Sigmoid colon (tissue), 7 donors: ENCODE measurements at regions of chr3 and their contacts with region 1.

Region 1: DNA sequence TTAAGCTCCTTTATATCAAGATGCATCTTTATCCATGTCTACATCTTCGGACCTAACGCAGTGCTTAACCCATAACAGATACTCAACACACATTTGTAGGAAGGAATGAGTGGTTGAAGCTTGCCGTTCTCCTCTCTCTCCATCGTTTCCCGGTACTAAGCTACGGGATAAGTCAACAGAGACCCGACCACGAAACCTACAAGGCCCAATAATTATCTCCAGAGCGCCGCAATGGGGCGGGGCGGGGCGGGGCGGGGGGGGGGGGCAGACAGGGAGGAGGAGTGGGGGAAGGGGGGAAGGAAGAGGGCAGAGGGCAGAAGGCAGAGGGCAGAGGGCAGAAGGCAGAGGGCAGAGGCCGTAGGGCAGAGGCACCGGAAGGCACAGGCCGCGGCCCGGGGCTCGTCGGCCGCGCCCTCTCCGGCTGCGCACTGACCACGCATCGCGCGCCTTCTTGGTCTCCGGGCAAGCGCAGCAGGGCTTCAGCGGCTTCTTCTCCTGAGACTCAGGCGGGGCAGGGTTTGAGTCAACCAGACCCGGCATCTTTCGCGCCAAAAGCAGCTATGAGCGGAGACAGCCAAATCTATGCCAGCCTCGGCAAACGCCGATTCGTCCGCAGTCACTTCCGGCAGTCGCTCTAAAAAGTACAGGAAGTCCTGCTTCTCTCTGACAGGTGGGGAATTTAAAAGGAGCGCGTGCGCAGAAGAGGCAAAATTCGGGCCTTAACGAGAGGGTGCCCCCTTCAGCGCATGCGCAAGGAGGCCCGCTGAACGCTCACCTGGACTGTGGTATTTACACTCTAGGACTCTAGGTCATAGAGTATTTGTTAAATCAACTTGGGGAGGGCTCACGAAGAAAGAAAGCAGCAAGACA is at the start of gene COX17:
- DNase-seq: peak; percentile 98
- H3K4me3 ChIP-seq: peak within 1 kb of the TSS; percentile 69 to 81 (median 74)
- H3K27ac ChIP-seq: peak within 1 kb of the TSS; percentile 93 to 96 (median 96)
- H3K4me1 ChIP-seq: peaks cover 0 to 19% (median 15%) of the 10 kb centered on the region in 4 donors
- H3K27me3 ChIP-seq: no peaks in the 10 kb centered on the region
- CTCF ChIP-seq: no peak
- EP300 ChIP-seq: no peak
- POLR2A ChIP-seq: peak; percentile 46 to 53
- total RNA-seq, gene COX17: 19.0 to 61.4 (median 42.4) TPM

Region 2: DNA sequence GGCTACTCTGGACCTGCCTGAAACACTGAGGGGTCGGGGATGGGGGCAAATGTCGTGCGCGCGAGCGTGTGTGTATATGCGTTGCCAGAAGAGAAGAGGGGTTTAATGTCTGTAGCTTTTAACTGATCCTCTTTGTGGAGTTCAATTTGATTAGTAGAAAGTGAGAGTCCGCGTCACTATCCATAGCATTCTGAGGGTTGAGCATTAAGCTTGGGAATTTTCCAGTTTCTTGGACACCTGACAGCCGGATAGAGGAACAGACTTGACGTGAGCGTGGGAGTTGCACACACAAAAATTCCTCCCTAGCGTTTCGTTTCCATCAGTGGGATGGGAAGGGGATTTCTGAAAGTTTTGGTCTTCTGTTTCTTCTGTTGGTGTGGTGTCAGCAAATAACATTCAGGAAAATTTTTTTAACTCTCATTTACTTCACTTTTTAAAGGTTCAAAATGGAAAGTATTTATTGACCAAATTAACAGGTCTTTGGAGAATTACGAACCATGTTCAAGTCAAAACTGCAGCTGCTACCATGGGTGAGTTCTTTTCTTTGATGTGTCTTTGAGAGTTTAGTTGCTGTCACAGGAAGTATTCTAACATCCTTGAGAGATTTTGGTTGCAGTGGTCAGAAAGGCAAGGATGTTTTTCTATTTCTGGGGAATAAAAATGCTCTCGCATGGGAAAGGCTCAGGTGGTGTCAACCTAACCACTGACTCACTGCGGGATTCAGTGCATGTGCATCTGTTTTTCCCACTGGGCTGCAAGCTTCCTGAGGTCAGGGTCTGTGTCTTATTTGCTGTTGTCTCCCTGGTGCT is 207.4 kb before region 1 on chr3:
- intact Hi-C with region 1: loop called (anchors 2 kb)
- DNase-seq: no peak
- H3K4me3 ChIP-seq: peak overlapping the region; percentile 62 to 78 (median 75)
- H3K27ac ChIP-seq: peak overlapping the region; percentile 73 to 79 (median 77)
- H3K4me1 ChIP-seq: peaks cover 0 to 20% (median 14%) of the 10 kb centered on the region in 4 donors
- H3K27me3 ChIP-seq: no peaks in the 10 kb centered on the region
- CTCF ChIP-seq: no peak
- EP300 ChIP-seq: no peak
- POLR2A ChIP-seq: no peak

Region 3: GRCh38 chr3:119498186-119498987 is 178.6 kb before region 1 on chr3 and contains the start of gene TIMMDC1:
- intact Hi-C with region 1: loop called (anchors 1 kb)
- DNase-seq: peak; percentile 98
- H3K4me3 ChIP-seq: peak within 1 kb of the TSS; percentile 70 to 79 (median 72)
- H3K27ac ChIP-seq: peak within 1 kb of the TSS; percentile 90 to 94 (median 92)
- H3K4me1 ChIP-seq: peaks cover 0 to 43% (median 30%) of the 10 kb centered on the region in 4 donors
- H3K27me3 ChIP-seq: no peaks in the 10 kb centered on the region
- CTCF ChIP-seq: no peak
- EP300 ChIP-seq: peak in 1 of 4 donors; percentile 42
- POLR2A ChIP-seq: peak; percentile 81 to 89
- total RNA-seq, gene TIMMDC1: 37.6 to 59.6 (median 53.1) TPM

Region 4: GRCh38 chr3:119517112-119517511 is 159.9 kb before region 1 on chr3:
- intact Hi-C with region 1: loop called (anchors 5 kb)
- DNase-seq: no peak
- H3K4me3 ChIP-seq: no peak overlapping the region
- H3K27ac ChIP-seq: peak overlapping the region; percentile 68 to 75 (median 71)
- H3K4me1 ChIP-seq: peaks cover 0 to 21% (median 5%) of the 10 kb centered on the region in 4 donors
- H3K27me3 ChIP-seq: no peaks in the 10 kb centered on the region
- CTCF ChIP-seq: no peak
- EP300 ChIP-seq: peak in 2 of 4 donors; percentile 4 to 44
- POLR2A ChIP-seq: no peak

Region 5: DNA sequence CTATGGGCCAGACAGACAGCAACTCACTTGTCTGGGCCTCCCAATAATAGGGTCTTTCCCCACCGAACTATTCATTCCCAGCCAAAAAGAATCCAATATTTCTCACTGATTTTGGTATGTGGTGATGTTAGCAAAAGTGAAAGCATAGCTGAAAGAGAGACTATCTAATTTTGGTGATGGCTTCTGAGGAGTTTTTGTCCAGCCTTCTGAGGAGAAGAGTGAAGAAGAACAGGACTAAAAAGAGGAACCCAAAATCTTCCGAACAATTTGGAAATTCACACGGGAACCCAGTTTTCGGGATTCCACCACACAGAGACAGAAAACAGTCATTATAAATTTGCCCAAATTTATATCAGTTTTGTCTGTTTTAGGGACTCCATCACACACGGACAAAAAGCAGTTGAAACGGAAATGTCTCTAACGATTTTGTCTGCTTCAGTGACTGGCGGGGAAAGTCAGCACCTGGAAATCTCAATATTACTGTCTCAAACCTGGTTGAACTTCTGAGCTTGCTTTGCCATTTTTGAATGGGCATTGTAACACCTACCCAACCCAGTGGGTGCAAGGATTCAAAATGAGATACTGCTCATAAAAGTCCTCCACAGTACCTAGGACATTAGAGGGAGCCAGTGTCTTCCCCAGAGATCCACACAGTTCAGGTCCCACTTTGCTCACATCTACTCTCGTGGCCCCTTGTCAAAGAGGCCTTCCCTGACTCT is 126.7 kb before region 1 on chr3:
- intact Hi-C with region 1: no loop called
- DNase-seq: no peak
- H3K4me3 ChIP-seq: no peak overlapping the region
- H3K27ac ChIP-seq: no peak overlapping the region
- H3K4me1 ChIP-seq: no peaks in the 10 kb centered on the region
- H3K27me3 ChIP-seq: no peaks in the 10 kb centered on the region
- CTCF ChIP-seq: no peak
- EP300 ChIP-seq: no peak
- POLR2A ChIP-seq: no peak

Region 6: GRCh38 chr3:119579366-119580165 is 97.4 kb before region 1 on chr3 and contains the start of gene ADPRH:
- intact Hi-C with region 1: loop called (anchors 2 kb)
- DNase-seq: peak; percentile 85
- H3K4me3 ChIP-seq: peak within 1 kb of the TSS; percentile 53 to 75 (median 68)
- H3K27ac ChIP-seq: peak within 1 kb of the TSS; percentile 90 to 95 (median 92)
- H3K4me1 ChIP-seq: peaks cover 0 to 18% (median 10%) of the 10 kb centered on the region in 4 donors
- H3K27me3 ChIP-seq: no peaks in the 10 kb centered on the region
- CTCF ChIP-seq: no peak
- EP300 ChIP-seq: no peak
- POLR2A ChIP-seq: no peak
- total RNA-seq, gene ADPRH: 6.3 to 11.6 (median 9.7) TPM

Region 7: GRCh38 chr3:119637679-119638525 is 39.1 kb before region 1 on chr3:
- intact Hi-C with region 1: loop called (anchors 5 kb)
- DNase-seq: no peak
- H3K4me3 ChIP-seq: no peak overlapping the region
- H3K27ac ChIP-seq: peak overlapping the region; percentile 56 to 77 (median 74)
- H3K4me1 ChIP-seq: peaks cover 0 to 30% (median 26%) of the 10 kb centered on the region in 4 donors
- H3K27me3 ChIP-seq: no peaks in the 10 kb centered on the region
- CTCF ChIP-seq: no peak
- EP300 ChIP-seq: no peak
- POLR2A ChIP-seq: no peak

Region 8: DNA sequence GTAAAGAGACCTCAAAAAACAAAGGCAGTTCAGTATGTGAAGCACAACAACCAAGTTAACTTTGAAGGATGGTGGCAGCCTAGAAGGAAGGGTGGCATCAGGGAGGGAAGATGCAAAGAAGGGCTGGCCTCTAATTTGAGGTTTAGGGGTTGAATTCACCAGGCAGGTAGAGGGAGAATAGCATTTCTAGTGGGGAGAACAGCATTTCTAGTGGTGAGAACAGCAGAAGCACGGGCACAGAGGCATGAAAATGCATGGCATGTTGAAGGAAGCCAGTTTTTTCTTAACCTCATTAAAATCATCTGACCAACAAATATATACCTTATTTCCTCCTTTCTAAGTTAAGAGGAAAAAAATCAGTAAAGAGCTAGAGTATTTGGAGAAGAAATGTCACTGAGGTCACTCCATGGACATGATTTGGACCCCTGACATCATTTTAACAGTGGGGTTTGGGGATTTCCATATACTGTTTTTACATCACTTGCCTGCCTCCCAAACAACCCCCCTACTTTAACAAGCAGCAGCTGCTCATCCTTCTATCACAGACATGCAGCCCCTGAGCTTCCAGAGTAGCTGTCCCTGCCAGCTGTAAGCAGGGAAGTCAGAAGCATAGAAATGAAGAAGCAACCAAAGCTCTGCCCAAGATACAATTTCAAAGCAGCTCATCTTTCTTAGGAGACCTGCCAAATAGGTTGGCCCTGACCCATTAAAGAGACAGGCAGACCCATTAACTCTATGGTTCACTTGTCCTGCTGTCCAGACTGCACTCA is 14.2 kb before region 1 on chr3:
- intact Hi-C with region 1: loop called (anchors 2 kb)
- DNase-seq: no peak
- H3K4me3 ChIP-seq: peak overlapping the region in 2 of 4 donors; percentile 2 to 4
- H3K27ac ChIP-seq: peak overlapping the region; percentile 70 to 91 (median 89)
- H3K4me1 ChIP-seq: peaks cover 0 to 60% (median 54%) of the 10 kb centered on the region in 4 donors
- H3K27me3 ChIP-seq: no peaks in the 10 kb centered on the region
- CTCF ChIP-seq: peak in 3 of 4 experiments; percentile 39 to 67 (median 43)
- EP300 ChIP-seq: no peak
- POLR2A ChIP-seq: peak in 1 of 2 donors; percentile 7